ENCODE measurements at regions of chr3 and their contacts with region 1.

Region 1: DNA sequence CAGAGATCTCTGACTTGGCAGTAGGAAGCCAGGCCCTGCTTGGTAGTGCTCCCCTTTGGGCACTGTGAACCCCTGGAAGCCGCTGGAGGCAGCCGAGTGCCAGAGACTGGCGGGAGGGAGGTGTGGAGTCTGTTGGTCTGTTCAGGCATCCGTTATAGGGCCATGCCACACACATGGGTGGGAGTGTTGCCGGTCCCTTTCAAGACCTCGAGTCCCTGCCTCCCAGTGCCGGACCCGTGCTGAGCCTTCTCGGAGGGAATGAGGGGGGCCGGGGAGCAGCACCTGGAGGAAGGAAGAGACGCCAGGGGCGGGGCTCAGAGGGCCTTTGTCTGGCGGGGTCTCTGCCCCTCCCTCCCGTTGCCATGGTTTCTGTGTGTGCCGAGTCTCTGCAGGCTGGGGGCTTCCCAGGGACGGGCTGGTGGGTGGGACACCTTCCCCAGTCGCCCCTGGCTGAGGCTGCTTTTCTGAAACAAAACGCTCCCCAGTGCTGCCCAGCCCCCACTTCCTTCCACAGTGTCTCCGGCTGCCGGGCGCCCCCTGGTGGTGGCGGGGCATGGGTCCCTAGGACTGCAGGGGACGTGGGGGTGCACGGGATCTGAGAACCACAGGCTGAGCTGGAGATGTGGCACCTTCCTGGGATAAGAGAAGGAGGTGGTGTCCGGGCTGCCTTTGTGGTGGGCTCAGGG is 10.0 kb downstream of the GNAI2 start:
- DNase-seq: peak; percentile 88
- H3K4me3 Mint-ChIP-seq: peak overlapping the region; percentile 82
- H3K27ac Mint-ChIP-seq: peak overlapping the region; percentile 98
- H3K4me1 Mint-ChIP-seq: peaks cover 70% of the 10 kb centered on the region
- H3K27me3 Mint-ChIP-seq: no peaks in the 10 kb centered on the region

Region 2: DNA sequence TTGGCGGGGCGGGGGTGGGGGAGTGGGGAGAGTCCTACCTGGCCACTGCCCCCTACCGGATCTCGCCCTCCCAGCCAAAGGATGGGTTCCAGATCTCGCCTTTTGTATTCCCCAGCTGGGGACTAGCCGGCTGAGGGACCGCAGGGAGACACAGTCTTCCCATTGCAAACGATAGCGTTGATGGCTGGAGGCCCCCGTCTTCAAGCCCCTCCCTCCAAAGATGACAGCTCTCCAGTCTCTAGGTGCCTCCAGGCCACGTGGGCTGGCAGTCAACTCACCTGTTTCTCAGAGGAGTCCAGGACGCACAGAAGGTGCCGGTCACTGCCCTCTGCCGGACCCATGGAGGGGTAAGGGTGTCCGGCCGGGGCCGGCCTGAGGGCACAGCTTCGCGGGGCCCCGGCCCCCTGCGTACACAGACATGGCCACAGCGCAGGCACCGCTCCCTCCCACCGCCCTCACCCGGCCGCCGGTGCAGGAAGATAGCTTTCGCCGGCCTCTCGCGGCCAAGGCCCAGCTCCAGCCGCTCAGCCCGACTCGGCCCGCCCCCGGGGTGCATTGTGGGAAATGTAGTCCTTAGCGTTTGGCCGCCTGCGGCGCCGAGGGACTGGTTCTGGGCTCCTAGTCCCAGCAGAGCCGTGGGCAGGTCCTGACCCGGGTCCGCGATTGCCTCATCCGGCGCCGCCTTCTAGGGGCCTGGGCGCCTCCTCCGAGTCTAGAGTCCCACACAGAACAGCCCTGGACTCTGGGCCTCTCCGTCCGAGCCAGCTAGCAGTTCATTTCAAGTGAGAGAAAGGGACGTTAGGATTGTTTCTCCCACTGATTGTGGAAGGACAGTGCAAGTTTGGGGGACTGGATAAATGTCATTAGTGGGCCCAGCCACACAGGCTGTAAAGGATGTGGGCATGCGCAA is 316.4 kb before region 1 on chr3 and contains the start of gene MON1A:
- intact Hi-C with region 1: loop called (anchors 1 kb)
- DNase-seq: peak; percentile 88
- H3K4me3 Mint-ChIP-seq: peak within 1 kb of the TSS; percentile 90
- H3K27ac Mint-ChIP-seq: peak within 1 kb of the TSS; percentile 81
- H3K4me1 Mint-ChIP-seq: peaks cover 21% of the 10 kb centered on the region
- H3K27me3 Mint-ChIP-seq: no peaks in the 10 kb centered on the region
- total RNA-seq, gene MON1A: 15.5 and 17.3 TPM in 2 replicates

Region 3: GRCh38 chr3:50227390-50228183 is 18.4 kb before region 1 on chr3:
- intact Hi-C with region 1: loop called (anchors 1 kb)
- DNase-seq: peak; percentile 91
- H3K4me3 Mint-ChIP-seq: peak overlapping the region; percentile 90
- H3K27ac Mint-ChIP-seq: peak overlapping the region; percentile 90
- H3K4me1 Mint-ChIP-seq: peaks cover 34% of the 10 kb centered on the region
- H3K27me3 Mint-ChIP-seq: peaks cover 13% of the 10 kb centered on the region

Region 4: GRCh38 chr3:50260027-50260941 is 14.3 kb after region 1 on chr3:
- intact Hi-C with region 1: loop called (anchors 1 kb)
- DNase-seq: peak; percentile 86
- H3K4me3 Mint-ChIP-seq: peak overlapping the region; percentile 68
- H3K27ac Mint-ChIP-seq: peak overlapping the region; percentile 68
- H3K4me1 Mint-ChIP-seq: no peaks in the 10 kb centered on the region
- H3K27me3 Mint-ChIP-seq: peaks cover 1% of the 10 kb centered on the region

Region 5: DNA sequence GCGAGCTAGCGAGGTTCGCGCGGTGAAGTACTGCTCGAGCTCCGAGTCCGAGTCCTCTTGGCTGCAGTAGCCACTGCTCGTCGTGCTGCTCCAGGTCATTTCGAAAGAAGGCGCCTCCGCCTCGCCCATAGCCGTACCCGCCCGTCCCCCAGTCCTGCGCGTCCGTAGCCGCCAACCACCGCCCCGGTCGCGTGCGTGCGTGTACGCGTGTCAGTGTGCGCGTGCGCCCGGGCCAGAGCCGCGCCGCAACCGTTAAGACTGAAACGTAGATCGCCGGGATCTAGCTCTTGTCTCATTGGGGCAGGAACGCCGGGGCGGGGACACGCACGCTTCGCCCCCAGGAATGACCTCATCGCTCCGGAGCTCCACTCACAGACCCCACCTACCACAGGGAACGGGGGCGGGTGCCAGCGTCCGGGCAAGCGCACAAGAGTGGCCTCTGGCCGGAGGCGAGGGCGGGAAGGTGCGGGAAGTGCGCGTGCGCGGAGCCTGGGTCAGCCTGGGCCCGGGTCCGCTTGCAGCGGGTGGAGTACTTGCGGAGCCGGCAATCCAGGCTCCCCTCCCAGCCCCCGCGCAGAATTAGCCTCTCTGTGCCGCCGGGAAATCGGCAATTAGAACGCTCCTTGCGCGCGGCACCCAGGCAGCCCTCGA is 91.3 kb after region 1 on chr3:
- intact Hi-C with region 1: loop called (anchors 1 kb)
- DNase-seq: peak; percentile 96
- H3K4me3 Mint-ChIP-seq: peak overlapping the region; percentile 96
- H3K27ac Mint-ChIP-seq: peak overlapping the region; percentile 97
- H3K4me1 Mint-ChIP-seq: peaks cover 51% of the 10 kb centered on the region
- H3K27me3 Mint-ChIP-seq: no peaks in the 10 kb centered on the region